Heart right ventricle (tissue), 16 donors: ENCODE measurements at regions of chr11 and their contacts with region 1.

Region 1: DNA sequence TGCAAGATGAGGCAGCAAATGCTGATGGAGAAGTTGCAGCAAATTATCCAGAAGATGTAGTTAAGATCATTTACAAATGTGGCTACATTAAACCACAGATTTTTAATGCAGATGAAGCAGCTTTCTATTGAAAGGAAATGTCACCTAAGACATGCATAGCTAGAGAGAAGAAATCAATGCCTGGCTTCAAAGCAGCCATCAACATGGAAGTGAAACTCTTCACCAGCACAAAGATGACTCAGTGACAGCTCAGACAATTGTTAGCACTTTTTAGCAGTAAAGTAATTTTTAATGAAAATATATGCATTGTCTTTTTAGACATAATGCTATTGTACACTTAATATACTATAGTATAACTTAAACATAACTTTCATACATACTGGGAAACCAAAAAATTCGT is 71.4 kb downstream of the FANCF start:
- DNase-seq: no peak
- ATAC-seq: no peak
- H3K4me3 ChIP-seq: no peak overlapping the region
- H3K27ac ChIP-seq: no peak overlapping the region
- H3K4me1 ChIP-seq: no peaks in the 10 kb centered on the region
- H3K27me3 ChIP-seq: no peaks in the 10 kb centered on the region
- CTCF ChIP-seq: no peak

Region 2: GRCh38 chr11:21301981-21302380 is 1252.2 kb before region 1 on chr11:
- intact Hi-C with region 1: loop called in 1 of 10 experiments (anchors 5 kb)
- DNase-seq: no peak
- ATAC-seq: no peak
- H3K4me3 ChIP-seq: no peak overlapping the region
- H3K27ac ChIP-seq: no peak overlapping the region
- H3K4me1 ChIP-seq: no peaks in the 10 kb centered on the region
- H3K27me3 ChIP-seq: no peaks in the 10 kb centered on the region
- CTCF ChIP-seq: no peak

Region 3: GRCh38 chr11:22497474-22497873 is 56.7 kb before region 1 on chr11:
- intact Hi-C with region 1: no loop called
- DNase-seq: no peak
- ATAC-seq: no peak
- H3K4me3 ChIP-seq: no peak overlapping the region
- H3K27ac ChIP-seq: no peak overlapping the region
- H3K4me1 ChIP-seq: no peaks in the 10 kb centered on the region
- H3K27me3 ChIP-seq: no peaks in the 10 kb centered on the region
- CTCF ChIP-seq: no peak